ENCODE measurements at regions of chr15 and their contacts with region 1.

Region 1: DNA sequence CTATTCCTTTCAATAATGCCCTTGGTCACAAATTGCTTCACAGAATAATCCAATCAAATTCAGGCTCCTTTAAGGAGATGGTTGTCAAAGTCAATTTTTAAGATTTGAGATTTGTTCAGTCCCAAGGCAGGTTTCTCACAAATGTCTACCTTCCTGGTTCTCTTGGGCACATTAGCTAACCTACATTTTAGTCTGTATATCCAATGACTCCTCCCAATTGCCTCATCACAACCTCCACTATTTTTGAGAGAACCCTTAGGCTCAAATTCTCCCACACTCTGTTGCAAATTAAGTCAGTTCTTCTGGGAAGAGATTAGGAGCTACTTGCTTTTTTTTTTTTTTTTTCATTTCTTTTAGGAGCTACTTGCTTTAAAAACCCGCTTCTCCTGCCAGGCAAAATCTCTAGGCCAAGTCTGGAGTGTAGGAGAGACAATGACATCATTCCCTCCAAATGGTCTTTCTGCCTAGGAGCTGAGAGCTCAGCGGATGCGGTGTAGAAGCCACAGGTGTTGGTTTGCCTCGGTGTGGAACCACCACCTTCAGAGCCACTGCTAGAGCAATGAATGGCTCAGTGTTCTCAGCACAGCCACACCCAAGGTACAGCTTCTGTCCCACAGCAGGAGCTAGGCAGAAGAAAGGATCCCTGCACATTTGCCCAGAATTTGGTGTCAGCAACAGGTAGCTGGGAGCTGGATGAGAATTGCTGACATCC is 10.0 kb upstream of the INO80 start:
- DNase-seq: peak; percentile 36 to 53
- H3K4me3 ChIP-seq: no peak overlapping the region
- H3K27ac ChIP-seq: no peak overlapping the region
- H3K4me1 ChIP-seq: peaks cover 12% of the 10 kb centered on the region
- H3K27me3 ChIP-seq: no peaks in the 10 kb centered on the region
- CTCF ChIP-seq: no peak

Region 2: DNA sequence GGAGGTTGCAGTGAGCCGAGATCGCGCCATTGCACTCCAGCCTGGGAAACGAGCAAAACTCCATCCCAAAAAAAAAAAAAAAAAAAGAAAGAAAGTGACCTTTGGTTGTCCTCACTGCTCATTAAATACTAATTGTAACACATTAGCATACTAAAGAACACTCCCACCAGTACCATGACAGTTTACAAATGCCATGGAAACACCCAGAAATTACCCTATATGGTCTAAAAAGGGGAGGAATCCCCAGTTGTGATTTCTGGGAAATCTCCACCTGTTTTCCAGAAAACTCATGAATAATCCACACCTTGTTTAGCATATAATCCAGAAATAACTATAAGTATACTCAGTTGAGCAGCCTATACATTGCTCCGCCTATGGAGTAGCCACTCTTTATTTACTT is 13.5 kb after region 1 on chr15:
- CTCF ChIA-PET with region 1: no interaction called
- POLR2A ChIA-PET with region 1: interaction called, 10 read pairs
- intact Hi-C with region 1: no loop called
- DNase-seq: no peak
- H3K4me3 ChIP-seq: no peak overlapping the region
- H3K27ac ChIP-seq: peak overlapping the region; percentile 41
- H3K4me1 ChIP-seq: peaks cover 12% of the 10 kb centered on the region
- H3K27me3 ChIP-seq: no peaks in the 10 kb centered on the region
- CTCF ChIP-seq: no peak

Region 3: DNA sequence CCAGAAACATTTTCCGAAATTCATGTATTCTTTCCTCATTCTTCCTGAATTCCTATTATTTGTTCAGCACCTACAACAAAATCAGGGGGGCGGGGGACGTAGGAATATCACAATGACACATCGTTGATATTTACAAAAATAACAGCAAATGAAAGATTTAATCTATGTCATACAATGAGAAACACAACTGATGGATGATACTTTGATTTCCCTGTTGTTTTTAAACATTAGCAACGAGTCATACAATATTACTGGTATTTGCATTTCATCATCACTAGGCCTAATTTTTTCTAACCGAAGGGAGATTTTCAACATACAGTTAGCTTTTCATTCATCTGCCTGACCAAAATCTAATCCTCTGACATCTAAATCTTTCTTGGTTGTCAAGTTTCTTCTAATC is 35.2 kb after region 1 on chr15:
- CTCF ChIA-PET with region 1: no interaction called
- POLR2A ChIA-PET with region 1: interaction called, 14 read pairs
- intact Hi-C with region 1: no loop called
- DNase-seq: peak in 1 of 2 experiments; percentile 64
- H3K4me3 ChIP-seq: no peak overlapping the region
- H3K27ac ChIP-seq: peak overlapping the region; percentile 61
- H3K4me1 ChIP-seq: peaks cover 22% of the 10 kb centered on the region
- H3K27me3 ChIP-seq: no peaks in the 10 kb centered on the region
- CTCF ChIP-seq: no peak

Region 4: GRCh38 chr15:41194444-41194843 is 68.4 kb after region 1 on chr15:
- CTCF ChIA-PET with region 1: no interaction called
- POLR2A ChIA-PET with region 1: interaction called, 23 read pairs
- intact Hi-C with region 1: no loop called
- DNase-seq: no peak
- H3K4me3 ChIP-seq: no peak overlapping the region
- H3K27ac ChIP-seq: no peak overlapping the region
- H3K4me1 ChIP-seq: no peaks in the 10 kb centered on the region
- H3K27me3 ChIP-seq: no peaks in the 10 kb centered on the region
- CTCF ChIP-seq: no peak

Region 5: GRCh38 chr15:41263891-41264351 is 137.8 kb after region 1 on chr15:
- CTCF ChIA-PET with region 1: no interaction called
- POLR2A ChIA-PET with region 1: no interaction called
- intact Hi-C with region 1: no loop called
- DNase-seq: no peak
- H3K4me3 ChIP-seq: no peak overlapping the region
- H3K27ac ChIP-seq: peak overlapping the region; percentile 16; the same call in 1 of the 2 replicates
- H3K4me1 ChIP-seq: peaks cover 20% of the 10 kb centered on the region
- H3K27me3 ChIP-seq: no peaks in the 10 kb centered on the region
- CTCF ChIP-seq: no peak